MCF 10A (cell line): ENCODE measurements at regions of chr3 and their contacts with region 1.

Region 1: DNA sequence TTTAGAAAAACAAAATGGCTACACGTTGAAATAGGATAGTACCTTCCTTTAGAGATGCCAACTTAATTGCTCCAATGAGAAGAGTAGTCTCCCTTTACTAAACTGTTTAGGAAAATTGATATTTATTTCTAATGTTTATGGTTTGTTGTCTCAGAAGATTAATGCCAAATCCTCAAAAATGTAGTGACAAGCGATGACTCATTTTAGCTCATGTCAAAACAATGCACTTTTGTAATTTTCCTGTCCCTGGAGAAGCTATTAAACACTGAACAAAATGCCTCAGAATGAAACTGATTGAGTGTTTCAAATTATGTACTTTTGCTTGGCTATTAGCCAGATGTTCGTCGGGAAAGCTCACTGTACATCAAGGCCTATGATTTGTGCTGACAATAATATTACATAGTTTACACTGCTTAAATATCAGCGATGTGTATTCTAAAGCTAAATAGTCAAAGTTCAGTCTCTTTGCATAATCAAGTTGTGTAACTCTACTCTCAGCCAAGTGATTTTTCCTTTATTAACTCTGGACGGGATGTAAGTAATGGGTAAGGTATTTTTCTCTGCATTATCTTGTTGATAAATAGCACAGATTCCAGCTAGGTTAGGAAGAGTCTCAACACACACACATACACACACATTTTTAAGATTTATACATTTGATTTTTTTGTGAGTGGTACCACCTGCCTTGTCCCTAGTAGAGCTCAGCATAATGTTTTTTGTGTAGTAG is 83.7 kb downstream of the CMSS1 start:
- DNase-seq: peak; percentile 79
- H3K4me3 Mint-ChIP-seq: peak overlapping the region; percentile 61
- H3K27ac Mint-ChIP-seq: peak overlapping the region; percentile 93
- H3K4me1 Mint-ChIP-seq: peaks cover 42% of the 10 kb centered on the region
- H3K27me3 Mint-ChIP-seq: no peaks in the 10 kb centered on the region
- CTCF ChIP-seq: no peak

Region 2: DNA sequence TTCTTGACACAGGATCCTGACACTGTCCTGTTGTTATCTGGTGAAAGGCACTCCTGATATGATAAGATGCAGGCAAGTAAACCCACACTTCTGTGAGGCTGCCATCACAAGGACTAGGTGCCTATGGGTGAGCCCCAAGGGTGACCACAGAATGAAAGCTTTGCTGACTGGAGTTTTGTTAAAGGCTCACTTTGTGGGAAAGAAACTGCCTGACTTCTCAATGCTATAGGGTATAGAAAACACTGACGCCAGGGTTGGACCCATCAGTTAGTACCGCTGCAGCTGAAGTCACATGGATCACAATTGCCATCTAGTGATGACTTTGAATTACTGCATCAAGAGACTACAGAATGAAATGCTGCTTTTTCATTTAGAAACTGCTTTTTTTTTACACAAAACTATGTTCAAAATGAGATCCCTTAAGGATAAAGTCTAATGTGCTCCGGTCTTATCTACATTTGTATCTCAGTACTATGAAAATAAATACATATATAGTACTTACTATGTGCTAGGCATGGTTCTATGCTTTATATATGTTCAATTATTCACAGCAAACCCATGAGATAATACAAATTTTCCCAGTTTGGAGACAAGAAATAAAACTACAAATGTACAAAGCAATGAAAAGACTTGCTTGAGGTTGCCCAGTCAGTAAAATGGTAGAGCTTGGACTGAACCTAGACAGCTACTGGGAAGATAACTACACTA is 147.9 kb before region 1 on chr3:
- CTCF ChIA-PET with region 1: no interaction called
- POLR2A ChIA-PET with region 1: no interaction called
- intact Hi-C with region 1: no loop called
- DNase-seq: peak; percentile 71
- H3K4me3 Mint-ChIP-seq: no peak overlapping the region
- H3K27ac Mint-ChIP-seq: no peak overlapping the region
- H3K4me1 Mint-ChIP-seq: peaks cover 17% of the 10 kb centered on the region
- H3K27me3 Mint-ChIP-seq: no peaks in the 10 kb centered on the region
- CTCF ChIP-seq: peak; percentile 74

Region 3: GRCh38 chr3:99859825-99860224 is 41.5 kb before region 1 on chr3:
- CTCF ChIA-PET with region 1: interaction called, 5 read pairs
- POLR2A ChIA-PET with region 1: interaction called, 10 read pairs
- intact Hi-C with region 1: no loop called
- DNase-seq: peak; percentile 58
- H3K4me3 Mint-ChIP-seq: no peak overlapping the region
- H3K27ac Mint-ChIP-seq: peak overlapping the region; percentile 69
- H3K4me1 Mint-ChIP-seq: peaks cover 35% of the 10 kb centered on the region
- H3K27me3 Mint-ChIP-seq: no peaks in the 10 kb centered on the region
- CTCF ChIP-seq: no peak

Region 4: GRCh38 chr3:99920481-99921376 is 19.4 kb after region 1 on chr3:
- CTCF ChIA-PET with region 1: no interaction called
- POLR2A ChIA-PET with region 1: interaction called, 10 read pairs
- intact Hi-C with region 1: no loop called
- DNase-seq: peak; percentile 73
- H3K4me3 Mint-ChIP-seq: no peak overlapping the region
- H3K27ac Mint-ChIP-seq: peak overlapping the region; percentile 85
- H3K4me1 Mint-ChIP-seq: peaks cover 19% of the 10 kb centered on the region
- H3K27me3 Mint-ChIP-seq: no peaks in the 10 kb centered on the region
- CTCF ChIP-seq: no peak

Region 5: GRCh38 chr3:99970198-99970597 is 68.8 kb after region 1 on chr3:
- CTCF ChIA-PET with region 1: no interaction called
- POLR2A ChIA-PET with region 1: interaction called, 17 read pairs
- intact Hi-C with region 1: no loop called
- DNase-seq: no peak
- H3K4me3 Mint-ChIP-seq: no peak overlapping the region
- H3K27ac Mint-ChIP-seq: no peak overlapping the region
- H3K4me1 Mint-ChIP-seq: peaks cover 35% of the 10 kb centered on the region
- H3K27me3 Mint-ChIP-seq: no peaks in the 10 kb centered on the region
- CTCF ChIP-seq: no peak

Region 6: DNA sequence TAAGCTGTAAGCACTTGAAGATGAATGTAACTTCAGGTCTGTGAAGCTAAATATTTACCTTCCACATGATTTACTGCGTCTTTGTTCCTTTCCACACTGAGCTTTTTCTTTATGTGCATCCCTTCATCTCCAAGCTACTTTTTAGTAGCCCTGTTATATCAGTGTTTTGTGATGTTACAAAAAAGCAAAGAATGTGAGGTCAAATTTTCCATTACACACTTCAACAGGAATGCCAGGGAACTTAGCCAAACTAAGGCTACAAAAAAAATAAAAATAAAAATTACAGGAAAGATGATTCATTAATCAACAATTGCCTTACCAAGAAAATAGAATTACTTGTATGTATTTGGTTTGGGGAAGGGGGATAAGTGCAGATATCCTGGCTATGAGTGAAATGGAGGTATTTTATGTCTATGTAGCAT is 140.0 kb after region 1 on chr3:
- CTCF ChIA-PET with region 1: no interaction called
- POLR2A ChIA-PET with region 1: interaction called, 7 read pairs
- intact Hi-C with region 1: loop called (anchors 2 kb)
- DNase-seq: peak; percentile 72
- H3K4me3 Mint-ChIP-seq: peak overlapping the region; percentile 29
- H3K27ac Mint-ChIP-seq: peak overlapping the region; percentile 79
- H3K4me1 Mint-ChIP-seq: peaks cover 54% of the 10 kb centered on the region
- H3K27me3 Mint-ChIP-seq: no peaks in the 10 kb centered on the region
- CTCF ChIP-seq: no peak